ENCODE measurements at regions of chr11 and their contacts with region 1.

Region 1: GRCh38 chr11:66126808-66127555 is 56.9 kb downstream of the PACS1 start:
- DNase-seq: peak; percentile 41
- H3K4me3 ChIP-seq: no peak overlapping the region
- CTCF ChIP-seq: peak; percentile 5

Region 2: GRCh38 chr11:65961232-65961901 is 165.6 kb before region 1 on chr11 and contains the start of gene SART1:
- CTCF ChIA-PET with region 1: no interaction called
- POLR2A ChIA-PET with region 1: no interaction called
- DNase-seq: peak; percentile 78
- H3K4me3 ChIP-seq: peak within 1 kb of the TSS; percentile 77
- CTCF ChIP-seq: no peak

Region 3: DNA sequence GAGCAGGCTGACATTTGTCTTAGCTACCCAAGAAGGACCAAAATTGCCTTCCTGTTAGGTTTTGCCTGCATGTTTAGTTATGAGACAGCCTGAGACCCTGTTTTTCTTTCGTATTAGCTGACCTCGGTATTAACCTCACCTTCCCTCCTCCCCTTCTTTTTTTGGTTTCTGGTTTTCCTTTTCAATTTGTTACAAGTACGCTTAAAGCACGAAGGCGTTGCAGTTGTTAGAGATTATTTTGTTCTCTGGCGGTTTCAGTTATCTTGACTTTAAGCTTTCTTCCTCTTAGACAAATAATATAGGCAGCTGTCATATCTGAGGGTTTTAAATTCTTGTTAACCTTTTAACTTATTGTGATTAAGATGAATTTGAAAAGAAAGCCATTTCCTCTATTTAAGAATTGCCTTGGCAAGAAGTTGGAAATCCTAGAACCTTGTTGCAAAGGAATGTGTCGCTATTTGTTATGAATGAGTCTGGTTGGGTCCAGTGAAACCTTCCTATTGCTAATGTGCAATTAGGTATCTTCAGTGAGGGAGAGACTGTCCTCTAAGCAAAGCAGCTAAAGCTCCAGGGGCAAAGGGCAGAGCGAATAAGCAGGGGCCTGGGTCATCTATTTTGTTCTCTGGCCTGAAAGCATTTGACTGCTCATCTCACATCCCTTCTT is 11.2 kb before region 1 on chr11:
- CTCF ChIA-PET with region 1: interaction called, 11 read pairs
- POLR2A ChIA-PET with region 1: interaction called, 3 read pairs
- DNase-seq: no peak
- H3K4me3 ChIP-seq: no peak overlapping the region
- CTCF ChIP-seq: no peak